ENCODE measurements at regions of chr1 and their contacts with region 1.

Region 1: GRCh38 chr1:178501705-178502329 is 5.1 kb upstream of the CLEC20A start:
- DNase-seq: no peak
- H3K4me3 ChIP-seq: no peak overlapping the region
- CTCF ChIP-seq: peak; percentile 90

Region 2: GRCh38 chr1:178294654-178295053 is 207.2 kb before region 1 on chr1:
- CTCF ChIA-PET with region 1: interaction called, 70 read pairs
- POLR2A ChIA-PET with region 1: no interaction called
- DNase-seq: no peak
- H3K4me3 ChIP-seq: no peak overlapping the region
- CTCF ChIP-seq: no peak

Region 3: GRCh38 chr1:178310685-178311105 is 191.1 kb before region 1 on chr1:
- CTCF ChIA-PET with region 1: interaction called, 204 read pairs
- POLR2A ChIA-PET with region 1: no interaction called
- DNase-seq: peak; percentile 34
- H3K4me3 ChIP-seq: no peak overlapping the region
- CTCF ChIP-seq: peak; percentile 43

Region 4: DNA sequence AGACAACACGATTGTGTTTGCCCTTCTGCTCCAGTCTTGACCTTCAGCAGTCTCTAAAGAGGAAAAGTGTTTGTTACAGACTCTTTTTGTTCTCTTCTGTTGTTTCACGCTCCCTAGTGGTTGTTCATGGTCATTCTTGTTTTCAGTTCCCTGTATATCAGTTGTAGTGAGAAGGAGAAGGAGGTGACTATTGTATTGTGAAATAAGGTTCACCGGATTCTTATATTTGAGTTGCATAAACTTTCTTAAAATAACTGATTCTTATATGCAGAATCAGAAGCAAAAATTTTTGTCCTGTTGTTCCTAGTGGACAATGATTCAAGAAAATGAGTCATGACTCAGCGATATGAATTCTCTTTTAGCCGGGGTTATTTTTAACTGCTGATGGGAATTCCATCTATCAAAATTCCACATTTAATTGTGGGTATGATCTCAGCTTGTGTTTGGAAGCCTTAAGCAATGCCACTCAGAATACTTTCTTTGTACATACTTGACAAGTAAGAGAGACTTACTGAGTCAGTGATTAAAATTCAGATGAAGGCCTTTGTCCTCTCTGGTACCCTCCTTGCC is 157.2 kb before region 1 on chr1:
- CTCF ChIA-PET with region 1: interaction called, 13 read pairs
- POLR2A ChIA-PET with region 1: no interaction called
- DNase-seq: peak; percentile 83
- H3K4me3 ChIP-seq: 0 out of 2 replicates have a peak overlapping the region, but pooled peaks have one; percentile 2
- CTCF ChIP-seq: peak; percentile 36

Region 5: DNA sequence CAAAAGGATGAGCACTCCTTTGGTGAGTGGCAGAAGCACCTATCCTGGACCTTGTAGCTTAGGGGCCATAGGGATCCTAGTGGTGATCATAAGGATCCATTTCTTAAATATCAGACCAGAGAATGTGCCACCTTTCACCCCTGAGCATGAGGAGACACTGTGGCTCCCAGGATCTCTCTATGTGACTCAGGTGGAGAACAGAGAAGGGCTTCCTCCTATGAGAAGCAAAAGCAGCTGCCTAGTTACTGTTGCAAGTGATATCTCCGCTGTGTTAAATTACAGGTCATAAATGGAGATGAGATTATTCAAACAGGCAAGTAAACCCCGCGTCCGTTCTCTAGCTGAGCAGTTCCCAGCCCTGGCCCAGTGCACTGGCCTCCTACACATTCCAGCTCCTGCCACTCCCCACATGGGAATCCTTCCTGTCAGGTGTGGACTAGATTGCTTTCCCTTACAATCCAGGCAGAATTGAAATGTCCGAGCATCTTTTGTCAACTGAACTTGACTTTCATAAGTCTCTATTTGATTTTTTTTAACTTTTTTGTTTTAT is 31.3 kb before region 1 on chr1:
- CTCF ChIA-PET with region 1: interaction called, 65 read pairs
- POLR2A ChIA-PET with region 1: no interaction called
- DNase-seq: no peak
- H3K4me3 ChIP-seq: no peak overlapping the region
- CTCF ChIP-seq: no peak

Region 6: GRCh38 chr1:178486100-178487069 is 15.4 kb before region 1 on chr1:
- CTCF ChIA-PET with region 1: interaction called, 125 read pairs
- POLR2A ChIA-PET with region 1: no interaction called
- DNase-seq: no peak
- H3K4me3 ChIP-seq: peak overlapping the region; percentile 3; the same call in 1 of the 2 replicates
- CTCF ChIP-seq: no peak

Region 7: GRCh38 chr1:178532392-178532791 is 30.6 kb after region 1 on chr1:
- CTCF ChIA-PET with region 1: interaction called, 72 read pairs
- POLR2A ChIA-PET with region 1: no interaction called
- DNase-seq: no peak
- H3K4me3 ChIP-seq: no peak overlapping the region
- CTCF ChIP-seq: peak; percentile 91

Region 8: DNA sequence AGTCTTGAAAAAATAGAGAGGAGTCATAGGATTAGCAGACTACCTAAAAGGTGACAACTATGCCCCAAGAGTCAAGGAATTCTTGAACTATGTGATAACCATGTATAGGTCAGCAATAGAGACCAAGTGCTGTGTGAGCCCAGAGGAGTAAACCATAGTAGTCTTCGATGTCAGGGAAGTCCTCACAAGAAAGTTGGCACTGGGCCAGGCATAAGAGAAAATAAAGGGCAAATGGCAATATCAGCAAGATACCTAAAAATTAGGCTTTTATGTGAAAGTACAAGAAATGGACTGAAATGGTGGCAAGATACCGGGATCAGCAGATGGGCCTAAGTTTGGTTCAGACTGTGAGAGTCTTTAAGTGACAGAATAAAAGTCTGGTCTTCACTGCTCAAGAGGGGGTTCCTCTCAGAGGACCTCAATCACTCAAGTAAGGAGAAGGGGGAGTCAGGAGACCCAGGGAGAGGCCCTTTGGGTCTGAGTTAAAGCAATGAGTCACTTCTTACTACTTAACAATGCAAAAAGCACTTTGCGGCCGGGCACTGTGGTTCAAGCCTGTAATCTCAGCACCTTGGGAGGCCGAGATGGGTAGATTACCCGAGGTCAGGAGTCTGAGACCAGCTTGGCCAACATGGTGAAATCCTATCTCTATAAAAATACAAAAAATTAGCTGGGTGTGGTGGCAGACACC is 106.0 kb after region 1 on chr1:
- CTCF ChIA-PET with region 1: no interaction called
- POLR2A ChIA-PET with region 1: no interaction called
- DNase-seq: no peak
- H3K4me3 ChIP-seq: no peak overlapping the region
- CTCF ChIP-seq: no peak

Measured in AG04449 (cell line).